ENCODE measurements at regions of chr15 and their contacts with region 1.

Region 1: DNA sequence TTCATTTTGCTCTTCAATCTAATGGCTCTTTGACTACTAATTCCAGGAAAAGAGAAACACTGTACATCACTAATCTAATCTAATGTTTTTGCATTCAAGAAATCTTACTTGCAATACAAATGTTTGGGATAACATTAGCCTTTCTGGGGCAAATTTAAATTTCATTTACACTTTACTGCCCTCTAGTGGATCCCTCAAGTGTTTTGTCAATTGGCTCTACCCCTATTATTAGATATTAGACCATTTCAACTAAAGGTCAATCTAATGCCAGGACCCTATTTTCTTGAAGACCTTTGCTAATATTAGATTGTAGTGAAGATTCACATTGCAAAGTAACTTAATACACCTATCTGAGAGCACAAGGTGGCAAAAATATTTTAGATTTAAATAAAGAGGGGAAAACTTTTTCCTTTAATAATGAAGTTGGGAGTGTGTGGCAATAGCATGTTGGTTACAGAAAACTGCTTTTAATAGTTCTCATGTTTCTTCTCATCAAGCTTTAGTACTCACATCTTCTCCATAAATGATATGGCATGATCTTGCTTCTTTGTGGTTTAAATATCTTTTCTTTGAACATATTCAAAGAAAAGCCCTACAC is 5.0 kb downstream of the C2CD4A start:
- DNase-seq: no peak
- ATAC-seq: no peak

Region 2: DNA sequence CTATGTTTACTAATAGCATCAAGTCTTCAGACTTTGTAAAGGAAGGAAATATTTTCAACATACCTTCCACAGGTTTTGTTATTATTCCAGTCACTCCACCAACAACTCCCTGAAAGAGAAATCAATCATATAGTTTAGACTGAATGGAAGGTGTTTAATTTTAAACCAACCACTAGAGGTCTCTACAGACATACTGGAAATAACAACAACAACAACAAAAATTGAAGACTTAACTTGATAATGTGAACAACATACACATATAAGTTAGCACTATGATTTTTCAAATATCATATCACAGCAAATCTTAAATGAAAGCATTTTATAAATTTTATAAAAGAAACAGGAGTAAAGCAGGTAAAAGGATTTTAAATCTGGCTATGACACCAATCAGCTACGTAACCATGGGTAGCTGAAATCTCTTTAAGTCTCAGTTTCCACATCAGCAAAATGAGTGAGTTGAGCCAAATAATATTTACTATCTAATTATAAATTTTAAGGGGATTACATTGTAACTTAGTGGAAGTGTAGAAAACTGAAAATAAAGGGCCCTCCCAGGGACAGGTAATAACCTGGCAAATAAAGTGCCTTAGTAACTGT is 199.8 kb before region 1 on chr15:
- intact Hi-C with region 1: loop called (anchors 5 kb)
- DNase-seq: no peak
- ATAC-seq: no peak

Region 3: DNA sequence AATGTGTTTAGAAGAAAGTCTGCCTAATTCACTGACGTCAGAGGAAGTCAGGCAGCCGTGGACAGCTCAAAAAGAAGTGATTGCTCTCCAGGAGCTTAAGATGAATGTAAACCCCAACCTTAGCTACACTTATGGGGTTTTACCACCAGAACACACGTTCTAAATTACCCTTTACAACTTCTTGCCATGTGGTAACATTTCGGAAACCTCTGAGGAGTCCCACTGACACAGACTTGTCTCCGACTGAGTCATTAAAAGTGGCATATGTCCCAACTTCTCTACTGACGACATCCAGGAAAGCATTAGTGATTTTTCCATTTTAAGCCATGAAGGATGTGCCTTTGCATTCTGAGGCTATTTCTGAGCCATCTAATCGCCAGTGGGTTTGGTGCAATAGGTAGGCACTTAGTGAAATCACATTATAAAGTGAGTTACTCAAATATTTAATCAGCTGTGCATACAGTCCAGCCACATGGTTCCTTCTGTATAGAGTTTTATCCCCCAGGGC is 27.3 kb after region 1 on chr15:
- intact Hi-C with region 1: no loop called
- DNase-seq: no peak
- ATAC-seq: no peak